ENCODE measurements at regions of chr4 and their contacts with region 1.

Region 1: GRCh38 chr4:120922381-120923206 is at the start of gene PRDM5:
- DNase-seq: peak; percentile 40
- H3K4me3 Mint-ChIP-seq: peak within 1 kb of the TSS; percentile 73
- H3K27ac Mint-ChIP-seq: peak within 1 kb of the TSS; percentile 54
- H3K4me1 Mint-ChIP-seq: peaks cover 13% of the 10 kb centered on the region
- H3K27me3 Mint-ChIP-seq: peaks cover 4% of the 10 kb centered on the region
- total RNA-seq, gene PRDM5: 0.20 to 0.57 TPM

Region 2: DNA sequence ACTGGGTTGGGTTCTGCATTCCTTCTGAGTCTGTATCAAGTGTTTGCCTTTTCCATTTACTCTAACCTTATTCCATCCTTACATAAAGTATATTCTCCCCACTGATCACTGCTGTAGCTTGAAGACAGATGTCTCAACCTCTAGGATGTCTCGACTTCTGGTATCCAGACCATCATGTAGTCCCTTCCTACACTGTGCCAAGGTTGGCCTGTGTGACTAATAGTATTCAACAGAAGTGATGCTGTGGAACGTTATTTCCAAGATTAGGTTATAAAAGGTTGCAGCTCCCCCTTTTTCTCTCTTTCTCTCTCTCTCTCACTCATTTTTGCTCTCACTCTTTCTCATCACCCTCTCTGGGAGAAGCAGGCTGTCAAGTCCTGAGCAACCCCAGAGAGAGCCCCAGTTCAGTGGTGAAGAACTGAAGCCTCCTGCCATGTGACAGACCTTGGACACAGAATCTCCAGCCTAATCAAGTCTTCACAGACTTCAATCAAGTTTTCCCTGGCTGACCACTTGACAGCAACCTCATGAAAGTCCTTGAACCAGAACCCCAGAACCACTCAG is 75.5 kb before region 1 on chr4:
- CTCF ChIA-PET with region 1: interaction called, 4 read pairs
- intact Hi-C with region 1: loop called (anchors 2 kb)
- DNase-seq: no peak
- H3K4me3 Mint-ChIP-seq: no peak overlapping the region
- H3K27ac Mint-ChIP-seq: no peak overlapping the region
- H3K4me1 Mint-ChIP-seq: peaks cover 8% of the 10 kb centered on the region
- H3K27me3 Mint-ChIP-seq: no peaks in the 10 kb centered on the region

Region 3: GRCh38 chr4:120948382-120948781 is 25.8 kb after region 1 on chr4:
- CTCF ChIA-PET with region 1: no interaction called
- intact Hi-C with region 1: no loop called
- DNase-seq: no peak
- H3K4me3 Mint-ChIP-seq: no peak overlapping the region
- H3K27ac Mint-ChIP-seq: no peak overlapping the region
- H3K4me1 Mint-ChIP-seq: no peaks in the 10 kb centered on the region
- H3K27me3 Mint-ChIP-seq: no peaks in the 10 kb centered on the region

Region 4: DNA sequence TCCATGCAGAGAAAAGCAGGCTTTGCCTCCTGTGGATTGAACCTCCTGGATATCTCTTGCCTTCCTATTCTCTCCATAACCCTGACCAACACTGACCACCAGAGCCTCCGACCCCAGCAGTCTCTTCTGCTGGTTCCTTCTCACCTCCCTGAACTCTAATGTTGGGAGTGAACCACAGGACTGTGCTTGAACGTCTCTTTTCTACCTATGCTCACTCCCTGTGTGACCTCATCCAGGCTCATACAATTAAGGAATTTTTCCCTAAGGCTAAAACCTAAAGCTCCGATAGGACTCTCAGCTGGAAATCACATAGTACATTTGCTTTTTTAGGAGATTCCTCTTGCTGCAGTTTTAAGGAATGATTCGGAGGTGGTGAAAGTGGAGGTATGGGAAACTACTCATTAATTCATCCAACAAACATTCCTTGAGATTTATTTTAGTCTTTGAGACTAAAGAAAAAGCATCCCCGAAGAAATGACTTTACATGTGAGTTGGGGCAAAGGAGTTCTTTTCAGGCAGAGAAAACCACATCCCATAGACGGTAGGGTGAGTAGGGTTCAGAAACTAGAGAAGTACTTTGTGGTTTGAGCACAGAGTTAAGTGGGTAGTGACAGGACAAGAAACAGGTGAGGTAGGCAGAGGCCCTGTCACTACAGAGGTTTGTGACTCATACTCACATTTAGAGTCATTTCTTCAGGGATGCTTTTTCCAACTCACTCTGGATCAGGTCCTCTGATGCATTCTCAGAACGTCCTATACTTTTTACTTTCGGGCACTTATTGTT is 118.9 kb after region 1 on chr4:
- CTCF ChIA-PET with region 1: no interaction called
- intact Hi-C with region 1: loop called (anchors 5 kb)
- DNase-seq: peak; percentile 53
- H3K4me3 Mint-ChIP-seq: no peak overlapping the region
- H3K27ac Mint-ChIP-seq: no peak overlapping the region
- H3K4me1 Mint-ChIP-seq: peaks cover 13% of the 10 kb centered on the region
- H3K27me3 Mint-ChIP-seq: no peaks in the 10 kb centered on the region

Region 5: DNA sequence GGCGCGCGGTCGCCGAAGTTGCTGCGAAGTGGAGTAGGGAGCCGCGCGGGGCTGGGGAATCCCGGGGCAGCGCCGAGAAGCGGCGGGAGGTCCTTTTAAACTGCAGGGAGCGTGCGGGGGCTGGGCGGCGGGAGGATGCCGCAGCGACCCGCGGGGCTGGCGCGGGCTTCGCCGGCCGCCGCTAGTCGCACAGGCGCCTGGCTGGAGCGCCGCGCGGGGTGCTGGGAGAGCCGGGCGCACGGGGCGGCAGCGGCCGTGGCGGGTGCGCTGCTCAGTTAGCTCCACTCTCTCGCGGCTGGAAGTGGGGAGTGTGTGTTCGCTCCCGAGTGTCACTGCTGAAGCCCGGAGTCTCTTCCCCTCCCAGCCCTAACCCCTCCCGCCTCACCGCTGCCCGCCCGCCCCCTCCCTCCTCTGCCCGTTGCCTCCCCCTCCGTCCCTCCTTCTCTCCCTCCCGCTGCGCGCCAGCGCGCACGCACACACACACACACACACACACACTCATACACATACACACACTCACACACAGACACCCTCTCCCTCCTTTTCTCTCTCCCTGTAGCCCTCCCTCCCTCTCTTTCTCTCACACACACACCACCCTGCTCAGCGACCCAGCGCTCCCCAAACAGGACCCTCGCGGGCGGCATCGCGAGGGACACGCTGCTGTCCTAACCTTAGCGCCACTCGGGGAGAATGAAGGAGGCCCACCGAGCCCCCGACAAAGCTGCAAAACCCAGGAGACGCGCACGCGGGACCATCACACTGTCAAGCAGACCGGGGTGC is 149.8 kb after region 1 on chr4 and contains the start of gene NDNF:
- CTCF ChIA-PET with region 1: no interaction called
- intact Hi-C with region 1: loop called (anchors 2 kb)
- DNase-seq: peak; percentile 70
- H3K4me3 Mint-ChIP-seq: peak within 1 kb of the TSS; percentile 77
- H3K27ac Mint-ChIP-seq: peak within 1 kb of the TSS; percentile 59
- H3K4me1 Mint-ChIP-seq: peaks cover 21% of the 10 kb centered on the region
- H3K27me3 Mint-ChIP-seq: peaks cover 44% of the 10 kb centered on the region
- total RNA-seq, gene NDNF: not detected

Region 6: GRCh38 chr4:121096629-121097028 is 174.0 kb after region 1 on chr4:
- CTCF ChIA-PET with region 1: no interaction called
- intact Hi-C with region 1: loop called (anchors 1 kb)
- DNase-seq: no peak
- H3K4me3 Mint-ChIP-seq: no peak overlapping the region
- H3K27ac Mint-ChIP-seq: no peak overlapping the region
- H3K4me1 Mint-ChIP-seq: no peaks in the 10 kb centered on the region
- H3K27me3 Mint-ChIP-seq: no peaks in the 10 kb centered on the region

Region 7: DNA sequence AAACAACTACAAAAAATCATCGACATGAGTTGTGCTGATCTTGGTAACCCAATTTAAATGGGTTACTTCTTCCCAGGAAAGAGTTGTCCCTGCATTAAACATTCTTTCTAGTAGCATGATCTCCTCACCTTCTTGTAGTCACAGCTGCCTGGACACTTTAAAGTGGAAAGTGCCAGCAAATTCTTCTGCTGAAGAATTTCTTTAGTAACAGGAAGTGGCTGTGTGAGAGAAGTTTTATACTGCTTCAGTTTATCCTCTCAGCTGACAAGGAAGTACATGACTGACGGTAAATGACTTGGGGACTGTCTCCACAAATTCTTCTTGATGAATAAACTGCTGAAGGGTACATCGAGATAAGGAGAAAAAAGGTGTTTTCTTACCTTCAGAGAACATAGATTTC is 259.7 kb after region 1 on chr4:
- CTCF ChIA-PET with region 1: no interaction called
- intact Hi-C with region 1: loop called (anchors 2 kb)
- DNase-seq: peak; percentile 30
- H3K4me3 Mint-ChIP-seq: peak overlapping the region; percentile 71
- H3K27ac Mint-ChIP-seq: peak overlapping the region; percentile 91
- H3K4me1 Mint-ChIP-seq: peaks cover 60% of the 10 kb centered on the region
- H3K27me3 Mint-ChIP-seq: no peaks in the 10 kb centered on the region

Measured in activated naive CD4-positive, alpha-beta T cell treated with anti-CD3 and anti-CD28 coated beads for 36 hours (primary cell).